Ovary (tissue), 10 donors: ENCODE measurements at regions of chr1 and their contacts with region 1.

Region 1: GRCh38 chr1:159791461-159791860 is 10.7 kb downstream of the DUSP23 start:
- DNase-seq: no peak
- H3K4me3 ChIP-seq: no peak overlapping the region
- H3K27ac ChIP-seq: no peak overlapping the region
- H3K4me1 ChIP-seq: no peaks in the 10 kb centered on the region
- H3K27me3 ChIP-seq: no peaks in the 10 kb centered on the region
- CTCF ChIP-seq: no peak
- EP300 ChIP-seq: no peak
- POLR2A ChIP-seq: no peak

Region 2: GRCh38 chr1:160040476-160040875 is 249.0 kb after region 1 on chr1:
- intact Hi-C with region 1: loop called in 1 of 4 experiments (anchors 1 kb)
- DNase-seq: no peak
- H3K4me3 ChIP-seq: no peak overlapping the region
- H3K27ac ChIP-seq: no peak overlapping the region
- H3K4me1 ChIP-seq: no peaks in the 10 kb centered on the region
- H3K27me3 ChIP-seq: no peaks in the 10 kb centered on the region
- CTCF ChIP-seq: no peak
- EP300 ChIP-seq: no peak
- POLR2A ChIP-seq: no peak